Breast epithelium (tissue), 4 donors: ENCODE measurements at regions of chr10 and their contacts with region 1.

Region 1: DNA sequence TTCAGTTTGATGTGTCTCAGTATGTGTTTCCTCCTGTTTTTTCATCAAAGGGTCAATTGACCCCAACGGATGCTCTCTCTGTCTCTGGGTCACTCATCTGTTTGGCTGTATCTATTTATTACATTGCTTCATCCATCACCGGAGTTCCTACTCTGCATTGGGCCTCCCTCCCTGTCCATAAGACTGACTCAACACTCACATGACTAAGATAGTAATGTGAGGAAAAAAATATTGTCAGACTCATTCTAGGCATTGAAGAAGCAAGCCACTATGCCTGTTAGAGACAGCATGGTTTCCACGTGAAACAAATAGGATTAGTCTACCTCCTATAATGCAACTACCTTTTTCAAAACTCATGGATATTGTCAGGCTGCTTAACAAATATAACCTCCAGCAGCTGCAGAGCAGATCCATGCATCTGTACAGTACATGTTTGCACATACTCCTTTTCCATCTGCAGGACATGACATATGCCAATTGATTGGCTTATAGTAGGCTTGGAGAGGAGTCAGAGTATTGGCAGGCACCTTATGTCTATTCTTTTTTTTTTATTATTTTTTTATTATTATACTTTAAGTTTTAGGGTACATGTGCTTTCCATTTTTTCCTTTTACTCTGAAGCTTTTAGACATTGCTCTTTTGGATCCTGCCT is 275.2 kb downstream of the LRRTM3 start:
- DNase-seq: no peak
- H3K4me3 ChIP-seq: no peak overlapping the region
- H3K27ac ChIP-seq: no peak overlapping the region
- H3K4me1 ChIP-seq: no peaks in the 10 kb centered on the region
- H3K27me3 ChIP-seq: no peaks in the 10 kb centered on the region
- CTCF ChIP-seq: no peak
- POLR2A ChIP-seq: no peak

Region 2: DNA sequence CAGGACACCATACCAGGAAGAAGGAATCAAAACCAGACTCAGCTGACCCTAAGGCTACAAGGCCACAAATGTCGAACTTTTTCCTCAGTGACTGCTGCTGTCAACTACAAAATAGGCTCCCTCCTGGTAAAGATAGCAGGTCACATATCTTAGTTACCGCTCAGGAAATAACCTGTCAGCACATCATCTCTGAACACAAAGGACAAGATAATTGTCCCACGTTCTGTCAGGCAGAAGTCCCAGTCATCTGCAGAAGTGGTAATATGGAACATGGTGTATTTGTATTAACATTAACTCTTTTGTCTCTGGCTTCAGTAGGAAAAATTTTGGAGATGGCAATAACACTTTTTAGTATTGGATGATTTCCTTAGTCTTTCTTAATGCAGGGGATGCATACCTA is 905.4 kb before region 1 on chr10:
- intact Hi-C with region 1: no loop called
- DNase-seq: no peak
- H3K4me3 ChIP-seq: no peak overlapping the region
- H3K27ac ChIP-seq: no peak overlapping the region
- H3K4me1 ChIP-seq: no peaks in the 10 kb centered on the region
- H3K27me3 ChIP-seq: no peaks in the 10 kb centered on the region
- CTCF ChIP-seq: no peak
- POLR2A ChIP-seq: no peak

Region 3: DNA sequence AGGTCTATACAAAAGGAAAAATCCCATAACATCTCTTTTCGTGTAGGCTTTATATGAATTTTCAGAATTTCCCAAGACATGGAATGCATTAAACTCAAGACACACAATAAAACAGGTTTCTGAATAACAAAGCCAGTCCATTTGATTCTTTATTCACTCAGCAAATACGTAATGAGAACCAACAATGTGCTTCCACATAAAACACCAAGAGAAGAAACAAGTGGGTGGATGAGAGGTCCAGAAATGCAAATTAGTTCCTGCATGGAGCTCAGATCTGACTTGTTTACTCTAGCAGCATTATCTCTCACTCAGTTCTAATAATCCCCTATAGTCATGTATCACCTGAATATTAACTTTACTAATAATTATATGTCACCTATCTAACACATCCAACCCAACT is 25.7 kb before region 1 on chr10:
- intact Hi-C with region 1: no loop called
- DNase-seq: no peak
- H3K4me3 ChIP-seq: no peak overlapping the region
- H3K27ac ChIP-seq: no peak overlapping the region
- H3K4me1 ChIP-seq: no peaks in the 10 kb centered on the region
- H3K27me3 ChIP-seq: no peaks in the 10 kb centered on the region
- CTCF ChIP-seq: no peak
- POLR2A ChIP-seq: no peak

Region 4: GRCh38 chr10:67912339-67912946 is 711.4 kb after region 1 on chr10:
- intact Hi-C with region 1: loop called (anchors 10 kb)
- DNase-seq: no peak
- H3K4me3 ChIP-seq: no peak overlapping the region
- H3K27ac ChIP-seq: no peak overlapping the region
- H3K4me1 ChIP-seq: no peaks in the 10 kb centered on the region
- H3K27me3 ChIP-seq: no peaks in the 10 kb centered on the region
- CTCF ChIP-seq: no peak
- POLR2A ChIP-seq: no peak